Heart left ventricle (tissue), 16 donors: ENCODE measurements at regions of chr17 and their contacts with region 1.

Region 1: GRCh38 chr17:14069251-14070021 is at the start of gene COX10:
- DNase-seq: peak; percentile 88 to 93 (median 91)
- ATAC-seq: peak; percentile 97 to 100 (median 99)
- H3K4me3 ChIP-seq: peak within 1 kb of the TSS; percentile 82 to 99 (median 94)
- H3K27ac ChIP-seq: peak within 1 kb of the TSS; percentile 84 to 96 (median 89)
- H3K4me1 ChIP-seq: peaks cover 0 to 39% (median 23%) of the 10 kb centered on the region in 12 donors
- H3K27me3 ChIP-seq: no peaks in the 10 kb centered on the region
- CTCF ChIP-seq: peak in 2 of 12 donors; percentile 5 to 15
- POLR2A ChIP-seq: peak in 1 of 2 donors; percentile 70
- total RNA-seq, gene COX10: 36.6 to 96.0 (median 55.4) TPM

Region 2: DNA sequence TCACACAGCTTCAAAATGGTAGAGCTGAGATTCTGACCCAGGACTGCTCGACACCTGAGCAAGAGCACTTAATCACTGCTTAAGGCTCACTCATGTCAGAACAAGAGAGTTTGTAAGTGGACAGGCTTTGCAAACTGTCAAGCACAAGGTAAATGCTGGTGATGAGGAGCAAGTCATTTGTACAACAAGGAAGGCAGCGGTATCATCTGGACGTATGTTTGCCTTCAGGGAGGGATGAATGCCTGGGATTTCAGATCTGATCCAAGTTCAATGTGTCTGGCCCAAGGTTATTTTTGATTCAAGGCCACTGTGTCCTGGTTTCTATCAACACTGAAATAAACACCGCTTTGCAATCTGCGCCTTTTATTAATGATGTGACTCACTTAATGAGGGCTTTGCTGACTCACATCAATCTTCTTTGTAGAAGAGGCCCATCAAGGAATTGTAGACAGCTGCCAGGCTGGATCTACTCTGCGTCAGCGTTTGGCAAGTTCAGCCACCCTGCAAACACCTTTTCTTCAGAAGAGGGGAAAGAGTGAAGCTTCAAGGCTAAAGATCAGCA is 293.3 kb before region 1 on chr17:
- intact Hi-C with region 1: loop called in 1 of 10 experiments (anchors 10 kb)
- DNase-seq: peak in 3 of 5 donors; percentile 29 to 60 (median 41)
- ATAC-seq: peak; percentile 89 to 97 (median 93)
- H3K4me3 ChIP-seq: no peak overlapping the region
- H3K27ac ChIP-seq: peak overlapping the region in 9 of 12 donors; percentile 11 to 75 (median 44)
- H3K4me1 ChIP-seq: peaks cover 0 to 4% (median 0%) of the 10 kb centered on the region in 12 donors
- H3K27me3 ChIP-seq: no peaks in the 10 kb centered on the region
- CTCF ChIP-seq: no peak
- POLR2A ChIP-seq: no peak

Region 3: DNA sequence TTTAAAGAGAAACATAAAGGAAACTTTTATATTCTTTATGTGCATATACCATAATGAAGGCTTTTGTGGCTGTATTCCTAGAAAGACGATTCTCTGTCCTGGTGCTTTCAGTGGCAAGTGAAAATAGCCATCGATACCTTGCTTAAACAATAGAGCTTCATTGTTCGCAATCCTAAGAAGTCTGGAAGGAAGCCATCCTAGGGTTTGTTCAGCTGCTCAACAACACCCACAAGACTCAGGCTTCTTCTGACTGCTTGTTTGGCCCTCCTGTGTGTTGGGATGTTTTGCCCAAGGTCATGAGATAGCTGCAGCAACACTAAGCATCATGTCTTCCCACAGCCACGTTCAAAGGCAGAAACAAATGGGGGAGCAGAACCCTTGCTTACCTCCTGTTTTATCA is 36.3 kb before region 1 on chr17:
- intact Hi-C with region 1: no loop called
- DNase-seq: no peak
- ATAC-seq: no peak
- H3K4me3 ChIP-seq: no peak overlapping the region
- H3K27ac ChIP-seq: no peak overlapping the region
- H3K4me1 ChIP-seq: peaks cover 0 to 2% (median 0%) of the 10 kb centered on the region in 12 donors
- H3K27me3 ChIP-seq: no peaks in the 10 kb centered on the region
- CTCF ChIP-seq: no peak
- POLR2A ChIP-seq: no peak

Region 4: GRCh38 chr17:14113137-14113536 is 43.7 kb after region 1 on chr17:
- intact Hi-C with region 1: no loop called
- DNase-seq: no peak
- ATAC-seq: no peak
- H3K4me3 ChIP-seq: no peak overlapping the region
- H3K27ac ChIP-seq: no peak overlapping the region
- H3K4me1 ChIP-seq: peaks cover 0 to 8% (median under 1%) of the 10 kb centered on the region in 12 donors
- H3K27me3 ChIP-seq: no peaks in the 10 kb centered on the region
- CTCF ChIP-seq: no peak
- POLR2A ChIP-seq: no peak